ENCODE measurements at regions of chr14 and their contacts with region 1.

Region 1: GRCh38 chr14:49862089-49862673 is 9.6 kb upstream of the NEMF start:
- DNase-seq: peak; percentile 77
- ATAC-seq: peak; percentile 39
- H3K4me3 Mint-ChIP-seq: no peak overlapping the region
- H3K27ac Mint-ChIP-seq: no peak overlapping the region
- H3K4me1 Mint-ChIP-seq: peaks cover 33% of the 10 kb centered on the region
- H3K27me3 Mint-ChIP-seq: peaks cover 2% of the 10 kb centered on the region
- CTCF ChIP-seq: peak; percentile 100

Region 2: DNA sequence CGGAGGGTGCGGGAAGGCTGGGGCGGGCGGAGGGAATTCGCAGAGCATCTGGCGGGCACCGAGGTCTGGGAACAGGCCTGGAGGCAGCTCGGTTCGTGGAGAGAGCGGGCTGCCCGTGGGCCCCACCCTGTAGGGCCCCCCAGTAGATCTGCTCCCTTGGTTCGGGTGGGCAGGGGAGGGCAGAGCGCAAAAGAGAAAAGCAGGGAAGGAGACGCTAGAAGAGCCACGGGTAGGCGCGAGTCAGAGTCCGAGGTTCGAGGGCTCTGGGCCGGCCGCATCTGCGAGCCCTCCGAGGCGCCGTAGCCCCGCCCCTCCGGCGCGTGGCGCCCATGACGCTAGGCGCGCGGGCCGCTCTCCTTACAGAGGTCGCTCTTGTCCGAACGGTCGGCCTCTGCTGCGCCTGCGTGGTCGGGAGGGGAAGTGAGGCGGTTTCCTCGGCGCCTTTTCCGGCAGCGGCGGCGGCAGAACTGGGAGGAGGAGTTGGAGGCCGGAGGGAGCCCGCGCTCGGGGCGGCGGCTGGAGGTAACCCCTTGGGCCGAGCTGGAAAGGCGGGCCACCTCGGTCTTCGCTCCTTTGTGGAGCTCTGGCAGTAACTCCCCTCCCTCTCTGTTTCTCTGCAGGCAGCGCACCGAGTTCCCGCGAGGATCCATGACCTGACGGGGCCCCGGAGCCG is 30.6 kb after region 1 on chr14 and contains the start of gene ARF6:
- CTCF ChIA-PET with region 1: interaction called, 30 read pairs
- POLR2A ChIA-PET with region 1: interaction called, 124 read pairs
- intact Hi-C with region 1: no loop called
- DNase-seq: peak; percentile 98
- ATAC-seq: peak; percentile 85
- H3K4me3 Mint-ChIP-seq: peak within 1 kb of the TSS; percentile 96
- H3K27ac Mint-ChIP-seq: peak within 1 kb of the TSS; percentile 98
- H3K4me1 Mint-ChIP-seq: peaks cover 38% of the 10 kb centered on the region
- H3K27me3 Mint-ChIP-seq: no peaks in the 10 kb centered on the region
- CTCF ChIP-seq: no peak
- total RNA-seq, gene ARF6: 136 and 142 TPM in 2 replicates

Region 3: DNA sequence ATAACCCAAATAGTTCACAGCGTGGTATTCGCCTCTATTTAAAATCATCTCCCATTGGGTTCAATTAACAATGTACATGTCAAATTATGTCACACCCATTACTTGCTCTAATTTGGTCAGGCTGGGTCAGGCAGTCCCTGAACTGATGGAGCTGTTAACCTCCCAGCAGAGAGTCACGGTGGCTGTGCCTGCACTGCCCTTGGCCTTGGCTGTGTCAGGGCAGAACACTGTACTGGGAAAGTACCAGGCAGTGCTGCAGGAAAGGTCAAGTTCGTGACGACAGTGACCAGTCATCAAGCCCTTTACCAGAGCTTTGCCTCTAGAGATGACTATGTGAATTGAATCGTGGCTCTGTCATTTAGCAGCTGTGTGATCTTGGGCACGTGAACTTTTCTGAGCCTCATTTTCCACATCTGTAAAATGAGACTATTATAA is 130.7 kb after region 1 on chr14:
- CTCF ChIA-PET with region 1: interaction called, 3 read pairs
- POLR2A ChIA-PET with region 1: interaction called, 19 read pairs
- intact Hi-C with region 1: no loop called
- DNase-seq: no peak
- ATAC-seq: peak; percentile 88
- H3K4me3 Mint-ChIP-seq: peak overlapping the region; percentile 73
- H3K27ac Mint-ChIP-seq: peak overlapping the region; percentile 90
- H3K4me1 Mint-ChIP-seq: peaks cover 36% of the 10 kb centered on the region
- H3K27me3 Mint-ChIP-seq: no peaks in the 10 kb centered on the region
- CTCF ChIP-seq: no peak

Region 4: DNA sequence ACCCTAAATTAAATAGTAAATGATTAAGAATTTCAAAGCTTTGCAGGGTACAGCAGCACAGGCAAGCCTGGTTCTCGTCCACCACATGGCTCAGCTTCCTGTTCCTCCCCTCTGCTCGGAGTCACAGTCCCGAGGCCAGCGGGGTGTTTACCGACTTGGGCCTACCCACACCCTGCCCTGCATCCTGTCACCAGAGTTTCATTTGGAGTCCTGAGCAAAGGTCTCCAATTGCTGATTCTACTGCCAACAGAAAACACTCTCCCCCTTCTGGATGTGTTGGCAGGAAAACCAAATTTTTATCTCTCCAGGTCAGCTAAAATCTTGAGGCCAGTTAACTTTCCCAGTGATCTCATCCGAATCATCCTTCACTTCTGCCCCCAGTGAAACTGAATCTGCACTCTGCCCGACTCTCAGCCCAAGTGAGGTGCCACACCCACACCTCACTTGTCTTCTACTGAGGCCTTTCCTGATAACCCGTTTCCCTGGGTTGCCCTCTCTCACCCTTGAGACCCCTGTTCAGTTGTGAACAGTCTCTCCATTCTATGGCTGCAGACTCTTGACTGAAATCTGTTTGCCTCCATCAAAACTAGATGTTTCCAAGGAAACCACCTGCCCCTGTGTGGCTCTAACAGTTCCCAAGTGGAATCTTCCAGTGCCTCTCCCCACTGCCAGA is 183.0 kb after region 1 on chr14:
- CTCF ChIA-PET with region 1: interaction called, 7 read pairs
- POLR2A ChIA-PET with region 1: interaction called, 41 read pairs
- intact Hi-C with region 1: no loop called
- DNase-seq: no peak
- ATAC-seq: peak; percentile 70
- H3K4me3 Mint-ChIP-seq: peak overlapping the region; percentile 2
- H3K27ac Mint-ChIP-seq: peak overlapping the region; percentile 92
- H3K4me1 Mint-ChIP-seq: peaks cover 71% of the 10 kb centered on the region
- H3K27me3 Mint-ChIP-seq: no peaks in the 10 kb centered on the region
- CTCF ChIP-seq: no peak

Region 5: GRCh38 chr14:50085570-50086320 is 223.6 kb after region 1 on chr14:
- CTCF ChIA-PET with region 1: interaction called, 14 read pairs
- POLR2A ChIA-PET with region 1: interaction called, 50 read pairs
- intact Hi-C with region 1: loop called (anchors 1 kb)
- DNase-seq: peak; percentile 44
- ATAC-seq: peak; percentile 75
- H3K4me3 Mint-ChIP-seq: peak overlapping the region; percentile 68
- H3K27ac Mint-ChIP-seq: peak overlapping the region; percentile 97
- H3K4me1 Mint-ChIP-seq: peaks cover 92% of the 10 kb centered on the region
- H3K27me3 Mint-ChIP-seq: no peaks in the 10 kb centered on the region
- CTCF ChIP-seq: no peak

Region 6: DNA sequence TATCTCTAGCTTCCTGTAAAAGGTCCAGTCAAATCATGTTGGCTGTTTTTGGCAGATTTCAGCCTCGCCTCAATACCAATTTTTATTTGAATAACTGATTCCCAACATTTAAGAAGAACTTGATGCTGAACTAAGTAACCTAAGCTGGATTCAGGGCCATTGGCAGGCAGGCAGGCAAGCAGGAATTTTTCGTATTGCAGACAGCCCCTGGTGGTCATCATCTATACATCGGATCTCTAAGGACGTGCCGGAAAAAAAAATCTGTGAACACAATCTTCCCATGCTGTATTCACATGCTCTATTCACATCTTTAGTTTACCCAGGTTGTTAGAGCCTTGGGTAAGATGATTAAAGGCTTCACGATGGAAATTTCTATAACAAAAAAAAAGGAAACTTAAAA is 247.2 kb after region 1 on chr14:
- CTCF ChIA-PET with region 1: interaction called, 63 read pairs
- POLR2A ChIA-PET with region 1: interaction called, 92 read pairs
- intact Hi-C with region 1: loop called (anchors 1 kb)
- DNase-seq: no peak
- ATAC-seq: no peak
- H3K4me3 Mint-ChIP-seq: no peak overlapping the region
- H3K27ac Mint-ChIP-seq: peak overlapping the region; percentile 20
- H3K4me1 Mint-ChIP-seq: peaks cover 46% of the 10 kb centered on the region
- H3K27me3 Mint-ChIP-seq: no peaks in the 10 kb centered on the region
- CTCF ChIP-seq: no peak